A549 (cell line): ENCODE measurements at regions of chr17 and their contacts with region 1.

Region 1: DNA sequence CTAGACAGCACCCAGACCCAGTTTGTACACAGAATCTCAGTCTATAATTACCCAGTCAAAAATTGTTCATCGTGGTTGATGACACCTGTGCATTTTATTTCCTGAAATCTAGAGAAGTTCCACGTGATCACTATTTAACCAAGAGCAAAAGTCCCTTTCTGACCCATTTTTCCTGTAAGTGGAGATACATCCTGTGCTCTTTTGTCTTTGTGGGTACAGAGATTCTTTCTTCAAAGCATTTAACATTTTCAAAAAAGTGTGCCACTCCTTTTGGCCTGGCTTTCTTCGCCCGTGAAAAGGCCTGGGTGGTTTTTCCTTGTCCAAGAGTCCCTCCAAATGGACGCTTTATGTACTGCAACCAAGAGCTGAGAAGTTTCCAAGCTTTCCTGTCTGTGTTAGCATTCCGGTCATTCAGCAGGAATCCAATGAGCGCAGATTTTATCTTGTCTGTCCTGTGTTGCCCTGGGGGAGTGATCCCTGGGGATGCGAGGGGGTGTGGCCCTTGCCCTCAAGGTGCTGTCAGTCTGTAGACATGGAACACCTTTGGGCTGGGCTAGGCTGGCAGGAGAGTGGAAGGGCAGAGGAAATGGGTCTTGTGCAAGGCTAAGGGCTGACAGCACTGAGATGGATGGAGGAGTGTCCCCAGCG is 161.1 kb upstream of the CACNG5 start:
- DNase-seq: peak; percentile 62 to 80
- ATAC-seq: peak; percentile 57 to 77; a peak in 5 of 6 replicates
- H3K4me3 ChIP-seq: no peak overlapping the region
- H3K27ac ChIP-seq: peak overlapping the region; percentile 63 to 72; a peak in 5 of 6 replicates
- H3K4me1 ChIP-seq: peaks cover 40% of the 10 kb centered on the region
- CTCF ChIP-seq: peak; percentile 91
- EP300 ChIP-seq: no peak
- POLR2A ChIP-seq: no peak
- RAD21 ChIP-seq: peak; percentile 97

Region 2: GRCh38 chr17:66446419-66446818 is 227.4 kb before region 1 on chr17:
- CTCF ChIA-PET with region 1: interaction called, 10 read pairs
- POLR2A ChIA-PET with region 1: no interaction called
- DNase-seq: no peak
- ATAC-seq: no peak
- H3K4me3 ChIP-seq: no peak overlapping the region
- H3K27ac ChIP-seq: no peak overlapping the region
- H3K4me1 ChIP-seq: peaks cover 33% of the 10 kb centered on the region
- CTCF ChIP-seq: no peak
- EP300 ChIP-seq: no peak
- POLR2A ChIP-seq: no peak
- RAD21 ChIP-seq: no peak

Region 3: DNA sequence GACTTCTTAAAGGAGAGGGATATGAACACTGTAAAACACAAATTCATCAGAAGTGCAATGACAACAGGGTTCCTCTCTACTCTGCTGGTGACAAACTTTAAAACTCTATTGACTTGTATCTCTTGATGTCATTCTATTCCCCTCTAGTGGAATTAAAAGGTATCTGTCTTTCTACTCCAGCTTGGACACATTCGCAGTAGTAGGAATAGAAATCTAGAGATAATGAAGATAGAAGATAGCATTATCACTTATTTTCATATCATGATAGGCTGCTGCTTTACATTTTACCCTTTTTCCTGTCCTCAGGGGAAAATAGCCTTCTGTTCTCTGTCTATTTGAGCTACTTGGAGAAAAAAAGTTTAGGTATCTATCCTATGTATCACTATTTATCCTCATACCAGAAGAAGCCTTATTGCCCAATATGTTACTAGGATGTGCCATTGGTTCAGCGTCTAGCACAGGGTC is 48.4 kb before region 1 on chr17:
- CTCF ChIA-PET with region 1: interaction called, 12 read pairs
- POLR2A ChIA-PET with region 1: no interaction called
- DNase-seq: peak; percentile 67 to 85
- ATAC-seq: peak; percentile 87 to 94
- H3K4me3 ChIP-seq: no peak overlapping the region
- H3K27ac ChIP-seq: no peak overlapping the region
- H3K4me1 ChIP-seq: peaks cover 8% of the 10 kb centered on the region; the same call in 2 of the 3 replicates
- CTCF ChIP-seq: peak; percentile 91
- EP300 ChIP-seq: no peak
- POLR2A ChIP-seq: no peak
- RAD21 ChIP-seq: peak; percentile 90 to 94

Region 4: DNA sequence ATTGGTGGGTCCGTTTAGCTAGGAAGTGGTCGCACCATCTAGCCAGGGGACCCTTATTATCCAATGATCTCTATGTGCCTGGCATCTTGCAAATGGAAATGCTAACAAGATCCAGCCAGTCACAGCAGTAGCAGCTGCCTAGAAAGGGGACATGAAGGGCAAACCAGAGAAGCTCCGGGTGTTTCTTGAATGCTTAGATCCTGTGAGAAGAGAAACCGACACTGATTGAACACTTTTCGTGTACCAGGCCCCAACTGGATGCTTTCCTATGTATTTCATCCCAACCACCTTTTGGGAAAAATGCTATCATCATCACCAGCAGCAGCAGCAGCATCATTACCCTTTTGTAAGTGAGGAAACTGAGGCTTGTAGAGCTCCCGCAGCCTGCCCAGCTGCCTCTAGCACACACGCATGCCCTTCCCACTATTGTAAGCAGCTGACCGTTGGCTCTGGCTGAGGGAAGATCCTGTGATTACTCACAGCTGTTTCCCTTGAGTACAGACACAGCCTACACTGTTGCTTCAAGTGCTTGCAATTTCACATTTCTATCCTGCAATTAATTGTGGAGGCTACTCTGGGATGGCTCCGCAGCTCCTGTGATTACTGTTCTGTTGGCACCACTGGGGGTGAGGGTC is 19.6 kb before region 1 on chr17:
- CTCF ChIA-PET with region 1: interaction called, 16 read pairs
- POLR2A ChIA-PET with region 1: interaction called, 5 read pairs
- DNase-seq: no peak
- ATAC-seq: no peak
- H3K4me3 ChIP-seq: no peak overlapping the region
- H3K27ac ChIP-seq: no peak overlapping the region
- H3K4me1 ChIP-seq: no peaks in the 10 kb centered on the region
- CTCF ChIP-seq: no peak
- EP300 ChIP-seq: no peak
- POLR2A ChIP-seq: no peak
- RAD21 ChIP-seq: no peak